Body of pancreas (tissue), 4 donors: ENCODE measurements at regions of chr10 and their contacts with region 1.

Region 1: GRCh38 chr10:103712570-103713498 is 142.5 kb downstream of the SH3PXD2A start:
- DNase-seq: peak; percentile 85 to 92 (median 86)
- ATAC-seq: peak; percentile 65
- H3K4me3 ChIP-seq: no peak overlapping the region
- H3K27ac ChIP-seq: no peak overlapping the region
- H3K4me1 ChIP-seq: peaks cover 27% of the 10 kb centered on the region
- H3K27me3 ChIP-seq: no peaks in the 10 kb centered on the region
- CTCF ChIP-seq: peak; percentile 68 to 95 (median 91)
- POLR2A ChIP-seq: no peak

Region 2: GRCh38 chr10:103859161-103860086 is 146.6 kb after region 1 on chr10:
- intact Hi-C with region 1: loop called (anchors 5 kb)
- DNase-seq: peak; percentile 70 to 80 (median 72)
- ATAC-seq: peak; percentile 62
- H3K4me3 ChIP-seq: no peak overlapping the region
- H3K27ac ChIP-seq: no peak overlapping the region
- H3K4me1 ChIP-seq: peaks cover 29% of the 10 kb centered on the region
- H3K27me3 ChIP-seq: no peaks in the 10 kb centered on the region
- CTCF ChIP-seq: peak; percentile 55 to 83 (median 74)
- POLR2A ChIP-seq: no peak